ENCODE measurements at regions of chr19 and their contacts with region 1.

Region 1: GRCh38 chr19:29735800-29736199 is 20.7 kb upstream of the C19orf12 start:
- DNase-seq: no peak
- ATAC-seq: no peak
- H3K4me3 ChIP-seq: no peak overlapping the region
- H3K27ac ChIP-seq: no peak overlapping the region
- H3K4me1 ChIP-seq: no peaks in the 10 kb centered on the region
- H3K27me3 ChIP-seq: no peaks in the 10 kb centered on the region; the same call in 1 of the 2 replicates
- CTCF ChIP-seq: no peak
- POLR2A ChIP-seq: no peak
- RAD21 ChIP-seq: no peak

Region 2: DNA sequence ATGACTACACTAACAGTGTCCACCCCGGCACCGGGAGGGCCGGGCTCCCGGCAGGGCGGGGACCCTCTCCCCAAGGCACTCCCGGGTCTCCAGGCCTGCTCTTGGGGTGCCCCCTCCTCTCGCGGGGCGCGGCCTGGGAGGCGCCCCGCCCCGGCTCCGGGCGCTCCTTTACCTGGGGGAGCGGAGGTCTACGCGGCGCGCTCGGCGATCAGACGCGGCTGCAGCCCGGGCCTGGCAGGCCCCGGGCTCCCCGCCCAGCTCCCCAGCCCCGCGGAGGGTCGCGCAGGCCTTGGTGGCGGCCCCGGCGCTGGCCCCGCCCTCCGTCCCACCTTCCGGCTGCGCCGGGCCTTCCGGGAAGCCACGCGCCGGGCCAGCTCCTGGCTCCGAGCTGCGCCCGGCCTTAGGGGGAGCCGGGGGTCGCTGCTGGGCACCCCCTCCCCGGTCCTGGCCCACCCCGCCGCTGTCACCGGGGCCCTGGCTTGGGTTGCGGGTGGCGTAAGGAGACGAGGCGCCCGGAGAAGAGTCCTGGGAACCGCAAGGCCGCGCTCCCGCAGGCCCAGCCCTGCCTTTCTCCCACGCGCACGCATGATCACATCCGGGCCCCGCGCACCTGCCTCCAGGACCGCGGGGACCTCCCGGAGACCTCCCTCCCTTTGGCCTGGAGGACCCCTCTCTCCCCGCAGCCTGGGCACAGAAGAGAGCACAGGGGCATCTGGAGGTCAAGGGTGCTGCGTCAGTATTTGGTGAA is 20.7 kb before region 1 on chr19 and contains the start of gene C19orf12:
- CTCF ChIA-PET with region 1: interaction called, 12 read pairs
- POLR2A ChIA-PET with region 1: no interaction called
- RAD21 ChIA-PET with region 1: no interaction called
- intact Hi-C with region 1: no loop called
- DNase-seq: no peak
- ATAC-seq: peak; percentile 81
- H3K4me3 ChIP-seq: peak within 1 kb of the TSS; percentile 80 to 96
- H3K27ac ChIP-seq: peak within 1 kb of the TSS; percentile 92
- H3K4me1 ChIP-seq: peaks cover 10% of the 10 kb centered on the region in 2 experiments
- H3K27me3 ChIP-seq: no peaks in the 10 kb centered on the region
- CTCF ChIP-seq: no peak
- POLR2A ChIP-seq: peak; percentile 45
- RAD21 ChIP-seq: no peak
- total RNA-seq, gene C19orf12: 10.0 TPM

Region 3: DNA sequence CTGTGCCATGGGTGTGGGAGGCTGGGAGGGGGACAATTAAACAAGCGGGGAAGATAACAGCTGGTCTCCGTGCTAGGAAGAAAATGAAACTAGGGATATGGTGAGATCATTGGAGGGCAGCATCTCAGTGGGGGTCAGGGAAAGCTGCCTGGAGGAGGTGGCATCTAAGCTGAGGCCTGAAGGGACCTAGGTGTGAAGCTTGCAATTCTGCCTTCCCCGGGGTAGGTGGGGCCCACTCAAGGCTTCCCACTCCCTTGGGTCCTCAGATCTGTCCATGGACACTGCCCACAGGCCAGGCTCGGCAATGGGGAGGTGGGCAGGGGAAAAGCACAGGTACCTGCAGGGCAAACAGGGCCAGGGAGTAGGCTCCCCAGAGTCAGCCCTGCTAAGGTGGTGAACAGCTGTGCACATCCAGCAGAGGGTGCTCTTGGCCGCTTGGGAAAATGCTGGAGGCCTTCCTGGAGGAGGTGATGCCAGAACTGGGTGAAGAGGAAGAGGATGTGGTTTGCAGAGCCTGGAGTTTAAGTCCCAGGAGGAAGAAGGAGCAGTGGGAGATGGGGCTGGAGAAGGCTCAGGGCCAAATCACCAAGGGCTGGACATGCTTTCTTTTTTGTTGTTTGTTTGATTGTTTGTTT is 50.3 kb after region 1 on chr19:
- CTCF ChIA-PET with region 1: no interaction called
- POLR2A ChIA-PET with region 1: no interaction called
- RAD21 ChIA-PET with region 1: no interaction called
- intact Hi-C with region 1: no loop called
- DNase-seq: peak; percentile 6
- ATAC-seq: peak; percentile 83
- H3K4me3 ChIP-seq: no peak overlapping the region
- H3K27ac ChIP-seq: no peak overlapping the region
- H3K4me1 ChIP-seq: no peaks in the 10 kb centered on the region
- H3K27me3 ChIP-seq: no peaks in the 10 kb centered on the region
- CTCF ChIP-seq: peak; percentile 29 to 73 (median 69); a peak in 5 of 6 replicates
- POLR2A ChIP-seq: no peak
- RAD21 ChIP-seq: peak; percentile 40; the same call in 1 of the 2 replicates

Region 4: GRCh38 chr19:29873024-29873800 is 137.4 kb after region 1 on chr19:
- CTCF ChIA-PET with region 1: interaction called, 37 read pairs
- POLR2A ChIA-PET with region 1: no interaction called
- RAD21 ChIA-PET with region 1: interaction called in 1 of 2 experiments, 5 read pairs
- intact Hi-C with region 1: loop called (anchors 1 kb)
- DNase-seq: no peak
- ATAC-seq: peak; percentile 89
- H3K4me3 ChIP-seq: peak overlapping the region; percentile 26 to 50
- H3K27ac ChIP-seq: peak overlapping the region; percentile 33; the same call in 1 of the 2 replicates
- H3K4me1 ChIP-seq: peaks cover 0 to 16% of the 10 kb centered on the region in 2 experiments; a peak in 3 of 4 replicates
- H3K27me3 ChIP-seq: no peaks in the 10 kb centered on the region
- CTCF ChIP-seq: peak; percentile 57 to 73 (median 71); a peak in 5 of 6 replicates
- POLR2A ChIP-seq: no peak
- RAD21 ChIP-seq: peak; percentile 74

Region 5: DNA sequence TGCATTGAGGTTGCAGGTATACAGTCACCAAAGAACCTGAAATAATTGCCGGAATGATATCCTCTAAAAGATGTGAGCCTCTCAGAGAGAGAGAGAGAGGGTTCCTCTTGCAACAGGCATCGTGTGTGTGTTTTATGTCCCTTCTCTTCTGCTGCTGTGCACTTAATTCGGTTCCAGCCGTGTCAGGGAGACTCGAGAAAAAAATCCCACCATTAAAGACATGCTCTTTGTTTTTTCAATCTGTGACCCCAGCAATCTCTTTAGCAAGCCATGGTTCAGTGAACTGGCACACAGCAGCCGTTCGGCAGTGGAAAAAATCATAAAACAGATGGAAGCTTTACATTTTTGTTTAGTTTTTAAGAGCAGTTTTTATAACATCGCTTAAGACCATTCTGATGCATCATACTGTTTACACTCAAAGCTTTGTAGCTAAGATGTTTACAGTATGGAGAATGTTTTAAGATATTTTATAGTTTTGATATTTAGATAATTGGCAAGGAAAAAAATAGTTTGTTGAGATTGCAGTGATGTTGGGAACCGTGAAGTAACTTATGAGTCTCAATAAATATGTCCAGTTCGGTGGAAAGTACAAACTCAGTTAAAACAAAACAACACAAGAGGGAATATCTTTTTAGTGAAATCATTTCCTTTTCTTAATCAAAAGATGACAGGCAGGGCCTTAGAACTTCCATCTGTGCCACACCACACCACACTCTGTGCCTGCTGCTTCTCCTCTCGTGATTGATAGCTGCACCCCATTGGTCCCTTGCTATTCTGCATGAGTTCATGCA is 605.2 kb after region 1 on chr19:
- CTCF ChIA-PET with region 1: no interaction called
- POLR2A ChIA-PET with region 1: no interaction called
- RAD21 ChIA-PET with region 1: no interaction called
- intact Hi-C with region 1: loop called (anchors 10 kb)
- DNase-seq: no peak
- ATAC-seq: no peak
- H3K4me3 ChIP-seq: no peak overlapping the region
- H3K27ac ChIP-seq: no peak overlapping the region
- H3K4me1 ChIP-seq: no peaks in the 10 kb centered on the region
- H3K27me3 ChIP-seq: peaks cover 26% of the 10 kb centered on the region
- CTCF ChIP-seq: no peak
- POLR2A ChIP-seq: no peak
- RAD21 ChIP-seq: no peak

Region 6: DNA sequence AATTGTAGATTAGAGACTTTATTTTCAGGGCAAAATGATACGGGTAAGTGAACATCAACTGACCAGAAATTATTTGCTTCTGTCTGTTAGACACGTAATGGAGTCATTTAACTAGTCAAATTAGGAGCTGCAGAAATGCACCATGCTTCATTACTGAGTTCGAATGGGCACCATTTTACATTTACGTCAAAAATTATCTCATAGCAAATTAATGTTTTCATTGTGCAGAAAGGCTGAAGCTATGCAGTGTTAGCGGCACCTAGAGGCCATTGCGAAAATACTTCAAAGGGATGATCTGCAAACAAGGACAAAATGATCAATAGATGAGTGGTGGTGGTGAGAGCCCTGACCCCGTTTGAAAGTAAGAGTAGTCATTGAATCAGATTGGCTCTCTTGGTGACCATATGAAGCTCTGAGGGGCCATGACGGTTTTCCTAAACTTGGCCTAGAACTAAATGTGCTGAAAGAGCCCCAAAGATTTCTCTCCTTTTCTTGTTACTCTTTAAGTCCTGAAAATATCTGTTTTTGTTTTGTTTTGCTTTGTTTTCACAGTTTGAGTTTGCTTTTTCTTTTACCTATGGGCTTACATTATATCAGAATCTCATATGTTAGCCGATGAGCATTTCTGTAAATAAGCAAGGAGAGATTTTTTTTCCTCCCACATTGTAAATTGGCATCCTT is 914.3 kb after region 1 on chr19:
- CTCF ChIA-PET with region 1: no interaction called
- POLR2A ChIA-PET with region 1: no interaction called
- RAD21 ChIA-PET with region 1: no interaction called
- intact Hi-C with region 1: loop called (anchors 1 kb)
- DNase-seq: peak; percentile 46
- ATAC-seq: peak; percentile 75
- H3K4me3 ChIP-seq: no peak overlapping the region
- H3K27ac ChIP-seq: no peak overlapping the region
- H3K4me1 ChIP-seq: no peaks in the 10 kb centered on the region
- H3K27me3 ChIP-seq: peaks cover 12% of the 10 kb centered on the region; the same call in 1 of the 2 replicates
- CTCF ChIP-seq: peak; percentile 46 to 86 (median 76); a peak in 5 of 6 replicates
- POLR2A ChIP-seq: no peak
- RAD21 ChIP-seq: peak; percentile 67

Measured in HCT116 (cell line).